Adrenal gland (tissue), 19 donors: ENCODE measurements at regions of chr2 and their contacts with region 1.

Region 1: GRCh38 chr2:66429071-66429477 is 5.9 kb upstream of the MEIS1 start:
- DNase-seq: peak in 3 of 7 donors; percentile 23 to 44 (median 35)
- H3K4me3 ChIP-seq: no peak overlapping the region
- H3K27ac ChIP-seq: no peak overlapping the region
- H3K4me1 ChIP-seq: peaks cover 6 to 27% of the 10 kb centered on the region in 2 donors
- H3K27me3 ChIP-seq: no peaks in the 10 kb centered on the region
- CTCF ChIP-seq: peak; percentile 75 to 91 (median 84)
- POLR2A ChIP-seq: no peak

Region 2: DNA sequence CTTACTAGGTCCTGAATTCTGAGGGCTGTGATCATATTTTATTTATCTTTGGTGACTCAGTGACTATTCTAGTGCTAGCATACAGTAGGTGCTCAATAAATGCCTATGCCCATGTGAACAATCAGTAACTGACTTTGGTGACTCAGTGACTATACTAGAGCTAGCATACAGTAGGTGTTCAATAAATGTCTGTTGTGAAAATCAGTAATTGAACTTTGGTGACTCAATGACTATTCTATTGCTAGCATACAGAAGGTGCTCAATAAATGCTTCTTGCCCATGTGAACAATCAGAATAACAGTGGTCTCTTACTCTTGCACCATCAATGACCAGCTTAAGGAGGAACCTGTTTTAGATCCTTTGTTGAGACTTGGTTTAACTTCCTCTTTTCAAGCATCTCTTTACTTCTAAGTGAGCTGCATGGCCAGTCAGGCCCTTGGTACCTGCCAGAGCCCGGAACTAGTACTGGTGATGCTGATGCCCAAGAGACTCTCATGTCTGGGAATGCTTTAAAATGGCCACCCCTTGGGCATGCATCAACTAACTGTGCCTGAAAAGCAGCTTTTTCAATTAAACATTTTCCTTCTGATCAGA is 781.7 kb before region 1 on chr2:
- intact Hi-C with region 1: loop called in 1 of 2 experiments (anchors 10 kb)
- DNase-seq: no peak
- H3K4me3 ChIP-seq: no peak overlapping the region
- H3K27ac ChIP-seq: no peak overlapping the region
- H3K4me1 ChIP-seq: no peaks in the 10 kb centered on the region
- H3K27me3 ChIP-seq: no peaks in the 10 kb centered on the region
- CTCF ChIP-seq: no peak
- POLR2A ChIP-seq: no peak

Region 3: DNA sequence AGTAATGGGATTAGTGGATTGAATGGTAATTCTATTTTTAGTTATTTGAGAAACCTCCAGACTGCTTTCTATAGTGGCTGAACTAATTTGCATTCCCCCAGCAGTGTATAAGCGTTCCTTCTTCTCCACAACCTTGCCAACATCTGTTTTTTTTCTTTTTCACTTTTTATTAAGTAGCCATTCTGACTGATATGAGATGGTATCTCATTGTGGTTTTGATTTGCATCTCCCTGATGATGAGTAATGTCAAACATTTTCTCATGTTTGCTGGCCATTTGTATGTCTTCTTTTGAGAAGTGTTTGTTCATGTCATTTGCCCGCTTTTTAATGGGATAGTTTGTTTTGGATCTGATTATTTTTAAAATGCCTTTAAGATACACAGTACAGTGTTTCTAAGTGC is 58.2 kb before region 1 on chr2:
- intact Hi-C with region 1: no loop called
- DNase-seq: no peak
- H3K4me3 ChIP-seq: no peak overlapping the region
- H3K27ac ChIP-seq: no peak overlapping the region
- H3K4me1 ChIP-seq: no peaks in the 10 kb centered on the region
- H3K27me3 ChIP-seq: no peaks in the 10 kb centered on the region
- CTCF ChIP-seq: no peak
- POLR2A ChIP-seq: no peak

Region 4: DNA sequence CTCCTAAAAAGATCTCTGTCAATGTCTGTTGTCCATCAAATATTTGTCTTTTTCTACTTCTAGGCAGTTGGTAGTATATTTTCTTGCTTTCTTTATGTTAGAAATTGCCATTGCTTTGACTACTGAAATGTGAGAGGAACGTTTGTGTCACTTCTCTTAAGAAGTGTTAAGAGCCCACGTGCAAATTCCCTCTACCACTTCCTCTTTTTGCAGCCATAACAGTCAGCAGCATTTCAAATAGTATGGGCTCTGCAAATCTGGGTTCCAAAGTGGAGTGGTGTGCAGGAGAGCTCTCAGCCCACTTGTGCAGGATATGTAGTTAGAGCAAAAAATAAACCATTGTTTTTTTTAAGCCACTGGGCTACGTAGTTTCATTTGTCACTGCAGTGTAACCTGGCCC is 319.9 kb after region 1 on chr2:
- intact Hi-C with region 1: no loop called
- DNase-seq: no peak
- H3K4me3 ChIP-seq: no peak overlapping the region
- H3K27ac ChIP-seq: no peak overlapping the region
- H3K4me1 ChIP-seq: no peaks in the 10 kb centered on the region
- H3K27me3 ChIP-seq: no peaks in the 10 kb centered on the region
- CTCF ChIP-seq: no peak
- POLR2A ChIP-seq: no peak

Region 5: GRCh38 chr2:67476809-67477790 is 1048.0 kb after region 1 on chr2:
- intact Hi-C with region 1: loop called in 1 of 2 experiments (anchors 10 kb)
- DNase-seq: peak in 4 of 7 donors; percentile 15 to 22 (median 17)
- H3K4me3 ChIP-seq: no peak overlapping the region
- H3K27ac ChIP-seq: no peak overlapping the region
- H3K4me1 ChIP-seq: peaks cover 0 to 12% of the 10 kb centered on the region in 2 donors
- H3K27me3 ChIP-seq: no peaks in the 10 kb centered on the region
- CTCF ChIP-seq: peak; percentile 25 to 67 (median 54)
- POLR2A ChIP-seq: no peak

Region 6: GRCh38 chr2:67840460-67841068 is 1411.5 kb after region 1 on chr2:
- intact Hi-C with region 1: loop called in 1 of 2 experiments (anchors 10 kb)
- DNase-seq: peak; percentile 71 to 87 (median 76)
- H3K4me3 ChIP-seq: no peak overlapping the region
- H3K27ac ChIP-seq: no peak overlapping the region
- H3K4me1 ChIP-seq: no peaks in the 10 kb centered on the region
- H3K27me3 ChIP-seq: no peaks in the 10 kb centered on the region
- CTCF ChIP-seq: peak; percentile 62 to 93 (median 86)
- POLR2A ChIP-seq: no peak